Mammary epithelial cell (primary cell): ENCODE measurements at regions of chr22 and their contacts with region 1.

Region 1: DNA sequence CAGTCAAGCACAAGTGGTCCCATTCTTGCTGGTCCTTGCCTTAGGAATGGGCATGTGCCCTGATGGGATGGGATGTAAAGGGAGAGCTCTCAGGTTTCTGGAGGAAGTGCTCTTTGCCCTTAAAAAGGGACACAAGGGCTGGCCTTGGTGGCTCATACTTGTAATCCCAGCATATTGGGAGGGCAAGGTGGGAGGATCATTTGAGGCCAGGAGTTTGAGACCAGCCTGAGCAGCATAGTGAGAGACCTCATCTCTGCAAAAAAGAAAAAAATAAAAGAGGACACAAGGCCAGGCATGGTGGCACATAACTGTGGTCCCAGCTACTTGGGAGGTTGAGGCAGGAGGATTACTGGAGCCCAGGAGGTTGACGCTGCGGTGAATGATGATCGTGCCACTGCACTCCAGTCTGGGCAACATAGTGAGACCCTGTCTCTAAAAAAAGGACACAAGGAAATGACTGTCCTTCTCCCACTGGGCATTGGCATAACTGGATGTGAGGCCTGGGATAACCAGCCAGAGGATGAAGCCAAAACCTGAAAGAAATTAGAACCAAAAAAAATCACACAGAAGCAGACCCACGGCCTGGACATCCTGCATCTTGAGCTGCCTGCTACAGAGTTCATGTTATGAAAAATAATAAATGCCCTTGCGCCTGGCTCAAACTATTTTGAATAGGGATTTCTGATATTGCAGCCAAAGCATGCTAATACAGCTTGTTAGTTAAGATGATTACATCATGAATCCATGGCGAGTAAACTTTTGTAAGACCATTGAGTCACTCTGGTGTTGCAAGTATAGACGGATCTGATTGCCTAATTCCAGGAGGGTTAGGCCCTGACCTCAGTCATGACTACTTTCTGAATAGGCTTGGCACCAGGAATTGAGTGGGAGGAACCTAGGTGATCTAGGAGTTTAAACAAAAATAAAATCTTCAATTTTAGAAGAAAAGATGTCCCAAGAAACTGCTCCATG is 12.9 kb upstream of the CRKL start:
- DNase-seq: peak; percentile 98
- H3K4me3 ChIP-seq: peak overlapping the region in 1 of 3 experiments; percentile 27
- H3K27ac ChIP-seq: peak overlapping the region; percentile 94
- H3K4me1 ChIP-seq: peaks cover 23% of the 10 kb centered on the region
- H3K27me3 ChIP-seq: no peaks in the 10 kb centered on the region
- CTCF ChIP-seq: no peak

Region 2: DNA sequence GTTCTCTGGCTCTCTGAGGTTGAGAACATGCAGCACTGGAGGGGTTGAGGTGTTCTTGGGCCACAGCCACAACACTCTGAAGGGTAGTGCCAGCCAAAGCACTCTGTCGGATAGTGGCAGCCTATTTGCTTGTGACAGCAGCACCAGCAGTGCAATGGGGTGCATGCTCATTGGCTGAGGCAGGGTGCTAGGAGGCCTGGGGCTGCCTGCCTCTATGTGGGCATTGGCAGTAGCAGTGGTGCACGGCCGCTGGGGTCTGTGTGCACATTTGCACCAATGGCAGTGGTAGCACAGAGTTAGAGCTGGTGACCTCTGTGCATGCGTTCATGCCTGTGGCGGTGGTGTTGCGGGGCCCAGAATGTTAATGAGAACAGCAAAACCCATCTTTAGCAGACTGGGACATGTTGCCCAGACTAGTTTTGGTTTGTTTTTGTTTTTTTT is 71.0 kb before region 1 on chr22:
- CTCF ChIA-PET with region 1: no interaction called
- dilution Hi-C with region 1: no loop called
- in situ Hi-C with region 1: no loop called
- intact Hi-C with region 1: no loop called
- DNase-seq: no peak
- H3K4me3 ChIP-seq: no peak overlapping the region
- H3K27ac ChIP-seq: no peak overlapping the region
- H3K4me1 ChIP-seq: no peaks in the 10 kb centered on the region
- H3K27me3 ChIP-seq: no peaks in the 10 kb centered on the region
- CTCF ChIP-seq: no peak

Region 3: GRCh38 chr22:20916983-20917810 is 12.9 kb after region 1 on chr22 and contains the start of gene CRKL:
- CTCF ChIA-PET with region 1: interaction called, 4 read pairs
- dilution Hi-C with region 1: no loop called
- in situ Hi-C with region 1: no loop called
- intact Hi-C with region 1: loop called (anchors 1 kb)
- DNase-seq: peak; percentile 98
- H3K4me3 ChIP-seq: peak within 1 kb of the TSS; percentile 90 to 98 (median 92)
- H3K27ac ChIP-seq: peak within 1 kb of the TSS; percentile 82
- H3K4me1 ChIP-seq: peaks cover 19% of the 10 kb centered on the region
- H3K27me3 ChIP-seq: no peaks in the 10 kb centered on the region
- CTCF ChIP-seq: peak; percentile 78 to 95
- total RNA-seq, gene CRKL: 75.0 to 80.3 TPM